Sigmoid colon (tissue), 7 donors: ENCODE measurements at regions of chr19 and their contacts with region 1.

Region 1: GRCh38 chr19:49205114-49205513 is 47.5 kb downstream of the TRPM4 start:
- DNase-seq: no peak
- H3K4me3 ChIP-seq: no peak overlapping the region
- H3K27ac ChIP-seq: no peak overlapping the region
- H3K4me1 ChIP-seq: peaks cover 0 to 8% (median under 1%) of the 10 kb centered on the region in 4 donors
- H3K27me3 ChIP-seq: no peaks in the 10 kb centered on the region
- CTCF ChIP-seq: no peak
- EP300 ChIP-seq: no peak
- POLR2A ChIP-seq: no peak

Region 2: DNA sequence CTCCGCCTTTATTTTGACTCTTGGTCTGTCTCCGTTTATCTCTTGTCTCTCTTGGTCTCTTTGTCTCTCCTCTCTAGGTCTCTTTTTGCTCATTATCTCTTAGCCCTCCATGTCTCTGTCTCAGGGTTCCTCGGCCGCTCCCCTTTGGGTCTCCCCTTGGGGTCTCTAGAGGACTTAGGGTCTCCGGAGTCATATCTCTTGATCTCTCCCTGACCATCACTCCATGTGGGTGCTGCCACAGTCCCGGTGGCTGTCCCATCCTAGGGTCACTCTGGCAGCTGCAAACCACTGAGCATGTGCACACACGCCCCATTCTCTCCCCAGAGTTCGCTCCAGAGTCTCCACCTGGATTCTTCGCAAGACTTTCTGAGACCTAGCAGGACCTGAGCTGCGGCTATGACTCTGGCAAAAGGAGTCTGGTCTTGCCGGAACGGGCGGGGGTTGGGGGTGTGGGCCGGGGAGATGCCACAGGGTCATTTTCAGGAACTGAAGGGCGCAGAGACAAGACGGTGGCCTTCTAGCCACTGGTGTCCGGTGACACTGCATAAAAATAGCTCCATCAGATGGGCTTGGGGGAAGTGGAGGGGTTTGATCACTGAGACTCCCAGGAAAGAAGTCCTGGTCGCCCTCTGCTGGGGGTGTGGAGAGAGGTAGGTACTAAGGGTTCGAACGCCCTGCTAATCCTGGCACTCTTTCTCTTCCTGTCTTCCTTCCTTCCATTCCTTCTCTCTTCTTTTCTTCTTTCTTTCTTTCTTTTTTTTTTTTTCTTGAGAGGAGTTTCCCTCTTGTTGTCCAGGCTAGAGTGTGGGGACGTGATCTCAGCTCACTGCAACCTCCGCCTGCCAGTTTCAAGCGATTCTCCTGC is 131.4 kb before region 1 on chr19:
- intact Hi-C with region 1: loop called (anchors 5 kb)
- DNase-seq: no peak
- H3K4me3 ChIP-seq: no peak overlapping the region
- H3K27ac ChIP-seq: no peak overlapping the region
- H3K4me1 ChIP-seq: peaks cover 0 to 8% (median 6%) of the 10 kb centered on the region in 4 donors
- H3K27me3 ChIP-seq: peaks cover 17 to 59% (median 45%) of the 10 kb centered on the region in 3 donors
- CTCF ChIP-seq: no peak
- EP300 ChIP-seq: no peak
- POLR2A ChIP-seq: no peak

Region 3: GRCh38 chr19:49097455-49098288 is 107.4 kb before region 1 on chr19:
- intact Hi-C with region 1: loop called (anchors 5 kb)
- DNase-seq: peak; percentile 79
- H3K4me3 ChIP-seq: no peak overlapping the region
- H3K27ac ChIP-seq: peak overlapping the region in 1 of 4 donors; percentile 30
- H3K4me1 ChIP-seq: no peaks in the 10 kb centered on the region
- H3K27me3 ChIP-seq: no peaks in the 10 kb centered on the region
- CTCF ChIP-seq: peak; percentile 92 to 99 (median 96)
- EP300 ChIP-seq: no peak
- POLR2A ChIP-seq: no peak